ENCODE measurements at regions of chr4 and their contacts with region 1.

Region 1: GRCh38 chr4:10535912-10536311 is 78.7 kb upstream of the ZNF518B start:
- DNase-seq: no peak
- H3K4me3 ChIP-seq: no peak overlapping the region
- H3K4me3 Mint-ChIP-seq: no peak overlapping the region
- H3K27ac ChIP-seq: no peak overlapping the region
- H3K27ac Mint-ChIP-seq: no peak overlapping the region
- H3K4me1 ChIP-seq: no peaks in the 10 kb centered on the region
- H3K4me1 Mint-ChIP-seq: no peaks in the 10 kb centered on the region
- H3K27me3 ChIP-seq: no peaks in the 10 kb centered on the region
- H3K27me3 Mint-ChIP-seq: peaks cover 2 to 3% of the 10 kb centered on the region in 2 donors

Region 2: GRCh38 chr4:9691238-9692065 is 844.5 kb before region 1 on chr4:
- CTCF ChIA-PET with region 1: no interaction called
- POLR2A ChIA-PET with region 1: no interaction called
- intact Hi-C with region 1: loop called (anchors 5 kb)
- DNase-seq: peak; percentile 89 to 93 (median 91)
- H3K4me3 ChIP-seq: peak overlapping the region; percentile 44 to 67
- H3K4me3 Mint-ChIP-seq: peak overlapping the region; percentile 79 to 91 (median 89)
- H3K27ac ChIP-seq: peak overlapping the region; percentile 67
- H3K27ac Mint-ChIP-seq: peak overlapping the region; percentile 53 to 95 (median 88)
- H3K4me1 ChIP-seq: peaks cover 6% of the 10 kb centered on the region
- H3K4me1 Mint-ChIP-seq: peaks cover 14 to 27% (median 19%) of the 10 kb centered on the region in 4 donors
- H3K27me3 ChIP-seq: no peaks in the 10 kb centered on the region
- H3K27me3 Mint-ChIP-seq: peaks cover 0 to 2% of the 10 kb centered on the region in 2 donors

Region 3: DNA sequence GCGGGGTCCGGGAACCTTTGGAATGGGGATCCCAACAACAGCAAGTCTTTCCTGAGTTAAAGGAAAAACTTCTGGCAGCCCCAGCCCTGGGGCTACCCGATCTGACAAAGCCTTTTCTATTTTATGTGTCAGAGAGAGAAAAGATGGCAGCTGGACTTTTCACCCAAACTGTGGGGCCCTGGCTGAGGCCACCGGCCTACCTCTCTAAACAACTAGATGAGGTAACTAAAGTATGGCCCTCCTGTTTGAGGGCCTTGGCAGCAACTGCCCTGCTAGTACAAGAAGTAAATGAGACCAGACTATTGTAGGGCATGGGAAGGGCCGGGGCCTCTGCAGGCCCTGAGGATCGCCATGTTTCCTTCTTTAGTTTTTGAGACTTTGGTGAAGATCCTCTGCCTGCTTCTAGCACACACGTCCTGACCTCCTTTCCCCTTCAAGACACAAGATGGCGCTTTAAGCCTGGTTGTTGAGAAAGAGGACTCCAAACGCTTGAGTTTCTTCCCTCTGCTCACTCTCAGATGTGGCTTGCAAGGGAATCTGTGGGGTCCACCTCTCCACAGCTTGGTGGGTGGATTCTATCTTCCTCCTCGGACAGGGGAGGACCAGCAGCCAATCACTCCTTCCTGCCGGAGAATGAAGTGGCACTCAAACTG is 773.0 kb before region 1 on chr4:
- CTCF ChIA-PET with region 1: no interaction called
- POLR2A ChIA-PET with region 1: no interaction called
- intact Hi-C with region 1: loop called (anchors 5 kb)
- DNase-seq: peak in 4 of 5 donors; percentile 6 to 31 (median 16)
- H3K4me3 ChIP-seq: no peak overlapping the region
- H3K4me3 Mint-ChIP-seq: no peak overlapping the region
- H3K27ac ChIP-seq: no peak overlapping the region
- H3K27ac Mint-ChIP-seq: no peak overlapping the region
- H3K4me1 ChIP-seq: no peaks in the 10 kb centered on the region
- H3K4me1 Mint-ChIP-seq: no peaks in the 10 kb centered on the region
- H3K27me3 ChIP-seq: no peaks in the 10 kb centered on the region
- H3K27me3 Mint-ChIP-seq: peaks cover 2 to 9% of the 10 kb centered on the region in 2 donors

Region 4: DNA sequence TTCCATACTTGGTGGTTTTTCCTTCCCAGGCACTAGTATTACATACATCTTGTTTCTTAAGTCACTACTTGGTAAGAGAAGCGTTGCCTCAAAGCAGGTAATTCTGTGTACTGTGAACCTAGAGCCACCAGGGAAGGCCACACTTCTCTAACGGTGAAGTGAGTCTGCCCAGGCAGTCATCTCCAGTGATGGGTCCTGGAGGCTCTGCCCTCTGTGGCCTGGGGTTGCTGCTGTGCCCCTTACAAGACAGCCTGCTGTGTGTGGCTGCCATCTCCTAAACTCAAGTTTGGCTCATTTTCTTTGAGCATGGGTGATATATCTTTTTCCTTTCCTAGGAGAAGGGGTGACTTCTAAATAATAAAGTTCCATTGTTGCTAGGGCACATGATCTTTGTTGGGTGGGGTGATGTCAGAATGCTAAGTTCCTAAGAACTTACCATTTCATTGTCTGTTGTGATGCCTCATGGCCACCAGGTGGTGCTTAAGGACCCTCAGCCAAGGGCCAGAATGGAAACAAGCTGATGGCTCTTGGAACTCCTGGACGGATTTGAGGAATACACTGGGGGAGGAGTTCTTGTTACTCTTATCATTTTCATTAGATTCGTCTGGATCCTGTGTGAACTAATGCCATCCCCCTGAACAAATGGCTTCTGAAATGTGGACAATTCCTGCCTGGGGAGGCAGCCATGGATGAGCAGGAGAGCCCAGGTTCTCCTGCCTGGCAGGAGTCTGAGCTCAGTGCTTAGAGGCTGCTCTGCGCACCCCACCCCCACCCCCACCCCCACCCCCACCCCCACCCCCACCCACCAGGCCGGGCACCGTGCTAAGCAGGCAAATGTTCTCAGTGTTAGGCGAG is 378.2 kb before region 1 on chr4:
- CTCF ChIA-PET with region 1: interaction called, 66 read pairs
- POLR2A ChIA-PET with region 1: no interaction called
- intact Hi-C with region 1: loop called (anchors 1 kb)
- DNase-seq: peak in 4 of 5 donors; percentile 21 to 34 (median 28)
- H3K4me3 ChIP-seq: no peak overlapping the region
- H3K4me3 Mint-ChIP-seq: no peak overlapping the region
- H3K27ac ChIP-seq: no peak overlapping the region
- H3K27ac Mint-ChIP-seq: peak overlapping the region in 1 of 7 donors; percentile 19
- H3K4me1 ChIP-seq: peaks cover 34% of the 10 kb centered on the region
- H3K4me1 Mint-ChIP-seq: peaks cover 22 to 41% (median 29%) of the 10 kb centered on the region in 4 donors
- H3K27me3 ChIP-seq: no peaks in the 10 kb centered on the region
- H3K27me3 Mint-ChIP-seq: peaks cover 0 to 1% of the 10 kb centered on the region in 2 donors

Region 5: GRCh38 chr4:10164877-10165283 is 371.0 kb before region 1 on chr4:
- CTCF ChIA-PET with region 1: interaction called, 66 read pairs
- POLR2A ChIA-PET with region 1: no interaction called
- intact Hi-C with region 1: loop called (anchors 1 kb)
- DNase-seq: no peak
- H3K4me3 ChIP-seq: no peak overlapping the region
- H3K4me3 Mint-ChIP-seq: no peak overlapping the region
- H3K27ac ChIP-seq: no peak overlapping the region
- H3K27ac Mint-ChIP-seq: peak overlapping the region in 1 of 7 donors; percentile 29
- H3K4me1 ChIP-seq: peaks cover 35% of the 10 kb centered on the region
- H3K4me1 Mint-ChIP-seq: peaks cover 19 to 36% (median 29%) of the 10 kb centered on the region in 4 donors
- H3K27me3 ChIP-seq: no peaks in the 10 kb centered on the region
- H3K27me3 Mint-ChIP-seq: no peaks in the 10 kb centered on the region

Region 6: GRCh38 chr4:10461091-10461849 is 74.6 kb before region 1 on chr4:
- CTCF ChIA-PET with region 1: interaction called, 28 read pairs
- POLR2A ChIA-PET with region 1: no interaction called
- intact Hi-C with region 1: loop called (anchors 1 kb)
- DNase-seq: peak; percentile 54 to 83 (median 80)
- H3K4me3 ChIP-seq: peak overlapping the region in 1 of 2 donors; percentile 34
- H3K4me3 Mint-ChIP-seq: peak overlapping the region; percentile 71 to 87 (median 84)
- H3K27ac ChIP-seq: no peak overlapping the region
- H3K27ac Mint-ChIP-seq: peak overlapping the region in 4 of 7 donors; percentile 32 to 81 (median 64)
- H3K4me1 ChIP-seq: peaks cover 25% of the 10 kb centered on the region
- H3K4me1 Mint-ChIP-seq: peaks cover 11 to 34% (median 20%) of the 10 kb centered on the region in 4 donors
- H3K27me3 ChIP-seq: peaks cover 5% of the 10 kb centered on the region
- H3K27me3 Mint-ChIP-seq: peaks cover 19 to 29% of the 10 kb centered on the region in 2 donors

Region 7: GRCh38 chr4:10524196-10524833 is 11.6 kb before region 1 on chr4:
- CTCF ChIA-PET with region 1: interaction called, 11 read pairs
- POLR2A ChIA-PET with region 1: no interaction called
- intact Hi-C with region 1: no loop called
- DNase-seq: no peak
- H3K4me3 ChIP-seq: no peak overlapping the region
- H3K4me3 Mint-ChIP-seq: no peak overlapping the region
- H3K27ac ChIP-seq: no peak overlapping the region
- H3K27ac Mint-ChIP-seq: no peak overlapping the region
- H3K4me1 ChIP-seq: no peaks in the 10 kb centered on the region
- H3K4me1 Mint-ChIP-seq: no peaks in the 10 kb centered on the region
- H3K27me3 ChIP-seq: no peaks in the 10 kb centered on the region
- H3K27me3 Mint-ChIP-seq: peaks cover 3 to 4% of the 10 kb centered on the region in 2 donors